Naive thymus-derived CD4-positive, alpha-beta T cell (primary cell): ENCODE measurements at regions of chr1 and their contacts with region 1.

Region 1: DNA sequence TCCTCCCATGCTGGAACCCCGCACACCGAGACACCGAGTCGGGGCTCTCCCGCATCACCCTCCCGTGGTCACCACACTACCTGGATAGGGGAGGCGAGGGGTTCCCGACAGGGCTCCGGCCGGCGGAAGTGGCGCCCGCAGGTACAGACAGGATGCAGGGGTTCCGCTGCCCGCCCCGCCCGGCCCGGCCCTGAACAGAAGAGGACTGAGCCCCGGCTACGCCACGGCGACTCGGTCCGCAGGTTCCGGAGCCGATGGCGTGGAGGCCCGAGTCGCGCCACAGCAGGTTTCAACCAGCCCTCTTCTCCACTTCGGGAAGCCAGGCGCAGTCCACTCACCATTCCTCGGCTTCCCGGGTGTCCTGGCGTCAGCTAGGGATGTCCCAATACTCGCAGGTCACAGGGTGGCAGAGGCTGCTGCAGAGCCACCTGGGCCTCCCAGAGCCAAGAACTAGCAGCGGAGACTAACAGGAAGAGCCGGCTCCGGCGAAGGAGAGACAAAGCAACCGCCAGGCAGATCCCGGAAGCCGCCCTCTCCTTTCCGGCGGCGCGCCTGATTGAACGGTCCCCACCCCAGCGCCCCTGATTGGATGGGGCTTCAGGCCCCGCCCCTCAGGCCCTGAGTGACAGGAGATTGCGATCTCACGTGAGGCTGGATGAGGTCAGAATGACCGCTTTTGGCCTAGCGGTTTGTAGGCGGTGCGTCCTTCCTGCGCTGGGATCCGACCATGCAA is at the start of gene ZNF669:
- DNase-seq: peak; percentile 84 to 91 (median 89)
- ATAC-seq: peak; percentile 99
- H3K4me3 ChIP-seq: peak within 1 kb of the TSS; percentile 96
- H3K4me3 Mint-ChIP-seq: peak within 1 kb of the TSS; percentile 83 to 93 (median 91)
- H3K27ac ChIP-seq: peak within 1 kb of the TSS; percentile 82
- H3K27ac Mint-ChIP-seq: peak within 1 kb of the TSS; percentile 70 to 93 (median 81)
- H3K4me1 ChIP-seq: peaks cover 3 to 4% of the 10 kb centered on the region in 2 donors
- H3K4me1 Mint-ChIP-seq: peaks cover 6 to 24% (median 16%) of the 10 kb centered on the region in 7 donors
- H3K27me3 ChIP-seq: no peaks in the 10 kb centered on the region
- H3K27me3 Mint-ChIP-seq: peaks cover 15 to 25% (median 21%) of the 10 kb centered on the region in 5 donors
- total RNA-seq, gene ZNF669: 7.9 to 15.8 (median 11.5) TPM

Region 2: GRCh38 chr1:246506674-246507481 is 597.1 kb before region 1 on chr1 and contains the start of gene SMYD3:
- CTCF ChIA-PET with region 1: no interaction called
- POLR2A ChIA-PET with region 1: no interaction called
- intact Hi-C with region 1: loop called in 1 of 2 experiments (anchors 10 kb)
- DNase-seq: peak; percentile 70 to 81 (median 75)
- ATAC-seq: peak; percentile 93
- H3K4me3 ChIP-seq: peak within 1 kb of the TSS; percentile 78
- H3K4me3 Mint-ChIP-seq: peak within 1 kb of the TSS; percentile 88 to 96 (median 93)
- H3K27ac ChIP-seq: peak within 1 kb of the TSS; percentile 75
- H3K27ac Mint-ChIP-seq: peak within 1 kb of the TSS; percentile 78 to 95 (median 91)
- H3K4me1 ChIP-seq: peaks cover 4 to 6% of the 10 kb centered on the region in 2 donors
- H3K4me1 Mint-ChIP-seq: peaks cover 19 to 41% (median 30%) of the 10 kb centered on the region in 7 donors
- H3K27me3 ChIP-seq: no peaks in the 10 kb centered on the region
- H3K27me3 Mint-ChIP-seq: no peaks in the 10 kb centered on the region
- total RNA-seq, gene SMYD3: 19.5 to 28.6 (median 24.2) TPM

Region 3: DNA sequence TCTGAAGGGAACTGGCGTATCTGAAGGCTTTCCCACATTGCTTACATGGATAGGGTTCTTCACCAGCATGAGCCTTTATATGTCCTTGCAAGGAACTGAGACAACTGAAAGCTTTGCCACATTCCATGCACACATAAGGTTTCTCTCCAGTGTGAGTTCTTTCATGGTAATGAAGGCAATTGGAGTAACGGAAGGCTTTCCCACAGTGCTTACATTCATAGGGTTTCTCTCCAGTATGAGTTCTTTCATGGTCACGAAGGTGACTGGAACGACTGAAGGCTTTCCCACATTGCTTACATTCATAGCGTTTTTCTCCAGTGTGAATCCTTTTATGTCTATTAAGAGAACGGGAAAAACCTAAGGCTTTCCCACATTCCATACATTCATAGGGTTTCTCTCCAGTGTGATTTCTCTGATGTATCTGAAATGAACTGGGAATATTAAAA is 52.8 kb after region 1 on chr1:
- CTCF ChIA-PET with region 1: no interaction called
- POLR2A ChIA-PET with region 1: no interaction called
- intact Hi-C with region 1: loop called in 1 of 2 experiments (anchors 5 kb)
- DNase-seq: peak in 2 of 9 donors; percentile 2 to 5
- ATAC-seq: no peak
- H3K4me3 ChIP-seq: no peak overlapping the region
- H3K4me3 Mint-ChIP-seq: no peak overlapping the region
- H3K27ac ChIP-seq: no peak overlapping the region
- H3K27ac Mint-ChIP-seq: no peak overlapping the region
- H3K4me1 ChIP-seq: no peaks in the 10 kb centered on the region
- H3K4me1 Mint-ChIP-seq: peaks cover 0 to 6% (median under 1%) of the 10 kb centered on the region in 7 donors
- H3K27me3 ChIP-seq: no peaks in the 10 kb centered on the region
- H3K27me3 Mint-ChIP-seq: no peaks in the 10 kb centered on the region

Region 4: GRCh38 chr1:247172996-247173395 is 69.0 kb after region 1 on chr1:
- CTCF ChIA-PET with region 1: no interaction called
- POLR2A ChIA-PET with region 1: interaction called, 3 read pairs
- intact Hi-C with region 1: loop called in 1 of 2 experiments (anchors 10 kb)
- DNase-seq: no peak
- ATAC-seq: peak; percentile 1
- H3K4me3 ChIP-seq: no peak overlapping the region
- H3K4me3 Mint-ChIP-seq: peak overlapping the region in 1 of 10 donors; percentile 29
- H3K27ac ChIP-seq: no peak overlapping the region
- H3K27ac Mint-ChIP-seq: peak overlapping the region in 1 of 9 donors; percentile 59
- H3K4me1 ChIP-seq: no peaks in the 10 kb centered on the region
- H3K4me1 Mint-ChIP-seq: peaks cover 0 to 22% (median 11%) of the 10 kb centered on the region in 7 donors
- H3K27me3 ChIP-seq: no peaks in the 10 kb centered on the region
- H3K27me3 Mint-ChIP-seq: no peaks in the 10 kb centered on the region

Region 5: DNA sequence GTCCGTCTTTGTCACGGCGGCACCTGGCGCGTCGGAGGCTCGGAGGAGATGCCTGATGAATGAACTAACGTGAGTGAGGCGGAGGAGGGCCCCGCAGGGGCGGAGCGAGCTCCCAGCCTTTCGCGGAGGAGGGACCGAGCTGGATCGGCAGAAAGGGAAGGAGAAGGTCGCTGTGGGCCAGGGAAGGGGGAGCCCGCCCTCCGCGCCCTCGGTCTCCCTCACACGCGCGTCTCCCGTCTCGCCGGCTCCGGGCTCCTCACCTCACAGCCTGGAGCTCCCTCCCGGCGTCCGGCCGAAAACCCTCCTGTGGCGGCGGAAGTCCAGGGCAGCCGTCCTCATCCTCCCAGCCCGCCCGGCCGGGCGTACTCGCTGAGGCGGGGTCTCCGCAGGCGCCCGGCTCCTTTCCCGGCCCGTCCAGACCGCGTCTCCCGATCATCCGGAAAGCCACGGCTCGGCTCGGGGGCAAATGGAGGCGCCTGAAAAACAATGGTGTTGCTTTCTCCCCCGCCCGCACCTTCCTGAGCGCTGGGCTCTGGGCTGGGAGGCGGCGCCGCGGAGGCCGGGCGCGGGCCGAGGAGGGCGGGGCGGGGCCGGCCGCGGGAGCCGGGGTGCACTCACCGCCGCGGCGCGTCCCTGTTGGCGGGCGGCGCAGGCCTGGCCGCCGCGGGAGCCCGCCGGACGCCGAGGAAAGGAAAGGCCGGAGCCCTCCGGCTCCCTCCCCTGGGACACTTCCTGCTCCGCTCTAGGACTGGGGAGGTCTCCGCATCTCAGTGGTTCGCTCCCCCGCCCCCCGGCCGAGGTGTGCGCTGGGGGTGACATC is 227.4 kb after region 1 on chr1 and contains the start of gene ZNF496:
- CTCF ChIA-PET with region 1: no interaction called
- POLR2A ChIA-PET with region 1: interaction called, 4 read pairs
- intact Hi-C with region 1: loop called (anchors 1 kb)
- DNase-seq: peak; percentile 46 to 77 (median 67)
- ATAC-seq: peak; percentile 76
- H3K4me3 ChIP-seq: peak within 1 kb of the TSS; percentile 64
- H3K4me3 Mint-ChIP-seq: peak within 1 kb of the TSS; percentile 91 to 99 (median 94)
- H3K27ac ChIP-seq: peak within 1 kb of the TSS; percentile 72
- H3K27ac Mint-ChIP-seq: peak within 1 kb of the TSS in 8 of 9 donors; percentile 77 to 92 (median 86)
- H3K4me1 ChIP-seq: peaks cover 6 to 14% of the 10 kb centered on the region in 2 donors
- H3K4me1 Mint-ChIP-seq: peaks cover 13 to 43% (median 29%) of the 10 kb centered on the region in 7 donors
- H3K27me3 ChIP-seq: no peaks in the 10 kb centered on the region
- H3K27me3 Mint-ChIP-seq: no peaks in the 10 kb centered on the region
- total RNA-seq, gene ZNF496: 9.5 to 25.1 (median 17.3) TPM